ENCODE measurements at regions of chr15 and their contacts with region 1.

Region 1: DNA sequence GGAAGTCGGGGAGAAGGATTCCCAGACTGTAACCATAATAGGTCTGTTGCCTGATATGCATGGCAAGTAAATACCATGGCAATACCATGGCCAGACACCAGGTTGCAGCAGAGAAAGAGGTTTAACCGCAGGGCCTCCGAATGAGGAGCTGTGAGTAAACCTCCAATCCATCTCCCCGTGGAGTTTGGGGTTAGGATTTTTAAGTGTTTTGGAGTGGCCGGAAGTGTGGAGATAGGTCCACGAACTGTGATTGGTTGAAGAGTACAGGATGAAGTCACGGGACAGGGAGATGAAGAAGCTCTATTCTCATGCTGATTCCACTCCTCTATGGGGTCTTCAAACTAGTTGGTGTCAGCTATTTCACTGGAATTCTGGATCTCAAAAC is 127.9 kb downstream of the ST8SIA2 start:
- DNase-seq: peak; percentile 89
- H3K4me3 ChIP-seq: no peak overlapping the region
- H3K27ac ChIP-seq: peak overlapping the region in 2 of 4 donors; percentile 31 to 43
- H3K4me1 ChIP-seq: no peaks in the 10 kb centered on the region
- H3K27me3 ChIP-seq: no peaks in the 10 kb centered on the region
- CTCF ChIP-seq: peak; percentile 71 to 89 (median 85)
- EP300 ChIP-seq: no peak
- POLR2A ChIP-seq: no peak

Region 2: GRCh38 chr15:92097474-92098178 is 424.0 kb before region 1 on chr15:
- intact Hi-C with region 1: loop called (anchors 10 kb)
- DNase-seq: no peak
- H3K4me3 ChIP-seq: no peak overlapping the region
- H3K27ac ChIP-seq: no peak overlapping the region
- H3K4me1 ChIP-seq: peaks cover 0 to 5% (median 0%) of the 10 kb centered on the region in 4 donors
- H3K27me3 ChIP-seq: no peaks in the 10 kb centered on the region
- CTCF ChIP-seq: peak; percentile 25 to 73 (median 68)
- EP300 ChIP-seq: no peak
- POLR2A ChIP-seq: no peak

Region 3: DNA sequence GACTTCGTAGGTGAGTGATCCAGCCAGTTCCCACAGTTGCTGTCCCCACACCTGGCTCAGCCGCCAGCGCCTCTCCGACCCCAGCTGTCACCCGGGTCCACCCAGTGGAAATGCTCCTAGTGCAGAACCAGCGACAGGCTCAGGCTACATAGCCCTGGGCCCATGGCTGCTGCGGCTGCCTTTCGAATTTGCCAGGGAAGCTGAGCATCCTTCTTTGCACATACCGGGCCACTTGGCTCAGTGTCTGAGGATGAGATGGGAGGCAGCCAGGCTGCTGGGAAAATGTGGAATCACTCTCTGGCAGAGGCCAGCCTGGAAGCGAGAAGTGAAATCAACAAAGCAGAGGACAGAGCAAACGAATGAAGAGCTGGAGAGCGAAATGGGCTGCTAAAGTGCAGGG is 47.9 kb before region 1 on chr15:
- intact Hi-C with region 1: no loop called
- DNase-seq: no peak
- H3K4me3 ChIP-seq: no peak overlapping the region
- H3K27ac ChIP-seq: no peak overlapping the region
- H3K4me1 ChIP-seq: no peaks in the 10 kb centered on the region
- H3K27me3 ChIP-seq: no peaks in the 10 kb centered on the region
- CTCF ChIP-seq: no peak
- EP300 ChIP-seq: no peak
- POLR2A ChIP-seq: no peak

Region 4: GRCh38 chr15:92617549-92618520 is 96.2 kb after region 1 on chr15:
- intact Hi-C with region 1: loop called (anchors 5 kb)
- DNase-seq: peak; percentile 94
- H3K4me3 ChIP-seq: no peak overlapping the region
- H3K27ac ChIP-seq: peak overlapping the region; percentile 47 to 77 (median 70)
- H3K4me1 ChIP-seq: peaks cover 0 to 53% (median 41%) of the 10 kb centered on the region in 4 donors
- H3K27me3 ChIP-seq: no peaks in the 10 kb centered on the region
- CTCF ChIP-seq: no peak
- EP300 ChIP-seq: no peak
- POLR2A ChIP-seq: no peak

Region 5: DNA sequence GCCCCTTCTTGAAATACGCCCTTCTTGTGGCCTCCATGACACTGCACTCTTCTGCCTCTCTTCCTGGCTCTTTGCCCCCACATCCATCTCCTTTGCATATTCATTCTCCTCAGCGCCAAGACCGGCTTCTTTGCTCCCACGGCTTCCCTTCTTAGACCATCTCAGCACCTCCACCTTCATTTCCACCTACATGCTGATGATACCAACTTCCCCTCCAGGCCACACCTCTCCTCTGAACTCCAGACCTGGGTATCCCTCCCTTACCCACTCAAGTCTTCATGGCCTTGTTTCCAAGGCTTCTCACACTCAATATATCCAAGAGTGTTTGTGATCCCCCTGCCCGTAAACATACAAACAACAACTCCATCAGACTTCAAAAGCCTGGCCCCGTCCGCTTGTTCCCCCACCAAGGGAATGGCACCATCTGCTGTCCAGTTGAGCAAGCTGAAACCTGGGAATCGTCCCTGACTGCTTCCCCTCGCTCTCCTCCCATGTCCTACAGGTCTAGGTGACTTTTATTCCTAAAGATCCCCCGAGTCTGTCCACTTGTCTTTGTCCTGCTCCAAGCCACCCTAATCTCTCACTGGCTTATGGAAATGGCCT is 161.7 kb after region 1 on chr15:
- intact Hi-C with region 1: loop called (anchors 1 kb)
- DNase-seq: peak; percentile 75
- H3K4me3 ChIP-seq: no peak overlapping the region
- H3K27ac ChIP-seq: peak overlapping the region in 2 of 4 donors; percentile 14 to 17
- H3K4me1 ChIP-seq: peaks cover 0 to 7% (median 0%) of the 10 kb centered on the region in 4 donors
- H3K27me3 ChIP-seq: no peaks in the 10 kb centered on the region
- CTCF ChIP-seq: peak; percentile 47 to 63 (median 56)
- EP300 ChIP-seq: no peak
- POLR2A ChIP-seq: no peak